Activated naive CD4-positive, alpha-beta T cell treated with anti-CD3 and anti-CD28 coated beads, Interleukin-2, amount 10 ng/mL, durations not matched to agents 7 days and 5 days (primary cell): ENCODE measurements at regions of chr11 and their contacts with region 1.

Region 1: DNA sequence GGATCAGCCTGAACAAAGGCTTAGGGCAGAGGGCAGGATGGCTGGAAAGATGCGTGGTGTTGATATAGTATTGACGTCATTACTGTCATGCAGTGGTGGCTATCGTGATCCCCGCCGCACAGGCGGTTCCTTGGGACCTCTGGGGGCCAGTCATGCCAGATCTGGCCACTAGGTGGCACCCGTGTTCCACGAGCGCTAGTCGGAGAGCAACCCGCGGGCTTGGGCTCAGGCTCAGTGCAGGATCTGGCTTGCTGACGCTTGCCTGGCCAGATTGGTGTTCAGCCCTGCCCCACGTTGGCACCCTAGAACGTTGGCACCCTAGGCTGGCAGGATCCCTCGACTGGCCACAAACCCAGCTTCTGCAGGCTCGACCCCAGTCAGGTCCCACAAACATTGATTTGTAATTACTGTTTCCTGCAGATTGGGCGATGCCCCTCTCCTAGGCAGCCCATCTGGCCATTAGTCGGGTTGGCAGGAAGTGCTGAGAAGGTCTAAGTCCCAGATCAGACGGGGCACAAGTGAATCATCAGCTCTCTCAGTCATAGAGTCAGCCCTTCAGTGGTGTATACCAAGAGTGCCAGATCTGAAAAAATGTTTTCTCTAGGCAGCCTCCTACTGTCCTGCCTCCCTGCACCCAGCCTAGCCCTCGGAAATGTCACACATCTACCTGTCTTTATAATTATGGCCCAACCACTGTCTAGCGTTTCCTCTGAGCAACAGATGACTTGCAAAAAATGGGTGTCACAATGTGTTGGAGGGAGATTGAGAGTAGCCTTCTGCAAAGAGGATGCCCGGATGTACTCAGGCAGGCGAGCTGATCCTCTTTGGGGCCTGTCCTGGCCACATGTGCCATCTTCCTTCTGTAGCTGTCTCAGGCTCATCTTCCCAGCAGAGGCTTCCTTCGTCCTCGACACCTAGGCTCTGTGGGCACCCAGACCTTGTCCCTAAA is 315.3 kb downstream of the TMEM135 start:
- DNase-seq: peak; percentile 87
- H3K4me3 Mint-ChIP-seq: no peak overlapping the region
- H3K27ac Mint-ChIP-seq: no peak overlapping the region
- H3K4me1 Mint-ChIP-seq: peaks cover 9% of the 10 kb centered on the region
- H3K27me3 Mint-ChIP-seq: peaks cover 15% of the 10 kb centered on the region

Region 2: GRCh38 chr11:87421422-87421821 is 68.4 kb after region 1 on chr11:
- CTCF ChIA-PET with region 1: interaction called, 37 read pairs
- DNase-seq: peak; percentile 22
- H3K4me3 Mint-ChIP-seq: no peak overlapping the region
- H3K27ac Mint-ChIP-seq: no peak overlapping the region
- H3K4me1 Mint-ChIP-seq: no peaks in the 10 kb centered on the region
- H3K27me3 Mint-ChIP-seq: no peaks in the 10 kb centered on the region